ENCODE measurements at regions of chrX and their contacts with region 1.

Region 1: DNA sequence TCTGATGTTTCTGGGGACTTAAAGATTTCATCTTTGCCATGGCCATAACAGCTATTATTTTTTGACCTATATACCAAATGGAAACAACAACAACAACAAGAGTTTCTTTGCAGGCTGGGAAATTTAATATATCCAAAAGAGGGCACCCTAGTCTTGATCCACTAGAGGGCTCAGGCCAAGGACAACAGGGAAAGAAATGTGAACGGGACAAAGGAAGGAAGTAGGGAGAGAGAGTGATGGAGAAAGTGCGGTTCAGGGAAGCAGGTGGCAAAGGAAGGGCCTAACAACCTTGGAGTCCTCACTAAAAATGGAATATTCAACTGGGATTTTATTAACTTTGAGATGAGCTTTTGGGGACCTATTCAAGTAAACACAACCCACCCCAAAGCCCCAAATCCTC is 67.8 kb upstream of the SCML1 start:
- DNase-seq: no peak
- H3K4me3 Mint-ChIP-seq: no peak overlapping the region
- H3K27ac Mint-ChIP-seq: peak overlapping the region; percentile 87
- H3K4me1 Mint-ChIP-seq: peaks cover 24% of the 10 kb centered on the region
- H3K27me3 Mint-ChIP-seq: no peaks in the 10 kb centered on the region

Region 2: GRCh38 chrX:17655211-17656034 is 14.0 kb before region 1 on chrX:
- CTCF ChIA-PET with region 1: no interaction called
- intact Hi-C with region 1: loop called (anchors 1 kb)
- DNase-seq: peak; percentile 26
- H3K4me3 Mint-ChIP-seq: peak overlapping the region; percentile 88
- H3K27ac Mint-ChIP-seq: peak overlapping the region; percentile 91
- H3K4me1 Mint-ChIP-seq: peaks cover 21% of the 10 kb centered on the region
- H3K27me3 Mint-ChIP-seq: no peaks in the 10 kb centered on the region

Region 3: DNA sequence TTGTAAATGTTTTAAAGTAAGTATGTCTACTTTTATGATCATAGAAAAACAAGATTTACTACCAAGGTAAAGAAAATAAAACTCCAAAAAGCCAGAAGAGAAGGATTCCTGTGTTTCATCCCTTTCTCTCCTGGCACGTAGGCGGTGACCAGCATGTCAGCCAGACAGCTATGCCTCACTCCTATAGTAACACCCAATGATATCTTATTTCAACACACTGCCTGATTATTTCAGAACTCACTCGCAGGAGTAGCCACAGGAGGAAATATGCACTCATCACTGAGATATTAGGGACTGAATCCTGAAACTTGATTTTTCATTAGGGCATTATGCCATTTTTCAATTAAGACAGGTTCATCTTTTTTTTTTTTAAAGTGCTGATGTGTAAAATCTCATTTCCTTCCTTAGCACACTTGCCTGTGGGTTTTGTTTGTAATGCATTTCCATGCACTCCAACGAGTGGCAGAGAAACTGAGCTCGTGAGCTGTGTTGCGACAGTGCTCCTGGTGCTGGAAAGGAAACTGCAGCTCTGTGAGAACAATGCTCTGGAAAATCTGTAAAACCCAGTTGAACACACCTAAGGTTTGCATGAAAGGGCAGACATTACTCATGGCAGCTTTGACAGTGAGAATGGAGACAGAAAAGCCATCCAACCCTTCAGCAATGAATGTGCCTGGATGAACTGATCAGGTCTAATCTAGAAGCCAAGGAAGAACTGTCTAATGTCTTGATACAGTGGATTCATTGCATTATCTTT is 173.5 kb after region 1 on chrX:
- CTCF ChIA-PET with region 1: no interaction called
- intact Hi-C with region 1: no loop called
- DNase-seq: no peak
- H3K4me3 Mint-ChIP-seq: no peak overlapping the region
- H3K27ac Mint-ChIP-seq: no peak overlapping the region
- H3K4me1 Mint-ChIP-seq: peaks cover 7% of the 10 kb centered on the region
- H3K27me3 Mint-ChIP-seq: no peaks in the 10 kb centered on the region